PC-9 (cell line): ENCODE measurements at regions of chr5 and their contacts with region 1.

Region 1: DNA sequence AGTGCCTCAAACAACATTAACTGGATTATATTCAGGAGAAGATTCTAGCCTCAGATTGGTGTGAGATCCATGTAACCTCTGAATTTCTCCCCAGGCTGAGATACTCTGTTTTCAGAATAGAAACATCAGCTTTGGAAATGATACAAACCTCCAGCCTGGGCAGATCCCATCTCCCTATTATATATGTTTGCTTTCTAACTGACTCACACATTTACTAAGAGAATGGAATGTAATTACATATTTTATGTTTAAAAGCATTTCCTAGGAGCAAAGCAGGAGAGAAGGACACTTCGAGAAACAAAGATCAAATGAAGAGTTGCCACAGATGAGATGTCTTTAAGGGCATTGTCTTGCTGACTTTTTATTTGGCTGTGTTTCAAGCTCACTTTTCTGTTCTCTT is 96.4 kb downstream of the CDH18 start:
- DNase-seq: peak in 1 of 2 experiments; percentile 16
- H3K4me3 ChIP-seq: no peak overlapping the region
- H3K27ac ChIP-seq: no peak overlapping the region
- H3K4me1 ChIP-seq: no peaks in the 10 kb centered on the region
- H3K27me3 ChIP-seq: no peaks in the 10 kb centered on the region
- CTCF ChIP-seq: no peak

Region 2: GRCh38 chr5:19853616-19854240 is 37.9 kb before region 1 on chr5:
- CTCF ChIA-PET with region 1: no interaction called
- POLR2A ChIA-PET with region 1: no interaction called
- intact Hi-C with region 1: loop called (anchors 2 kb)
- DNase-seq: peak in 1 of 2 experiments; percentile 45
- H3K4me3 ChIP-seq: no peak overlapping the region
- H3K27ac ChIP-seq: no peak overlapping the region
- H3K4me1 ChIP-seq: no peaks in the 10 kb centered on the region
- H3K27me3 ChIP-seq: no peaks in the 10 kb centered on the region
- CTCF ChIP-seq: no peak

Region 3: GRCh38 chr5:19959830-19960384 is 68.3 kb after region 1 on chr5:
- CTCF ChIA-PET with region 1: no interaction called
- POLR2A ChIA-PET with region 1: no interaction called
- intact Hi-C with region 1: no loop called
- DNase-seq: no peak
- H3K4me3 ChIP-seq: no peak overlapping the region
- H3K27ac ChIP-seq: no peak overlapping the region
- H3K4me1 ChIP-seq: no peaks in the 10 kb centered on the region
- H3K27me3 ChIP-seq: no peaks in the 10 kb centered on the region
- CTCF ChIP-seq: no peak